MCF 10A (cell line): ENCODE measurements at regions of chrX and their contacts with region 1.

Region 1: DNA sequence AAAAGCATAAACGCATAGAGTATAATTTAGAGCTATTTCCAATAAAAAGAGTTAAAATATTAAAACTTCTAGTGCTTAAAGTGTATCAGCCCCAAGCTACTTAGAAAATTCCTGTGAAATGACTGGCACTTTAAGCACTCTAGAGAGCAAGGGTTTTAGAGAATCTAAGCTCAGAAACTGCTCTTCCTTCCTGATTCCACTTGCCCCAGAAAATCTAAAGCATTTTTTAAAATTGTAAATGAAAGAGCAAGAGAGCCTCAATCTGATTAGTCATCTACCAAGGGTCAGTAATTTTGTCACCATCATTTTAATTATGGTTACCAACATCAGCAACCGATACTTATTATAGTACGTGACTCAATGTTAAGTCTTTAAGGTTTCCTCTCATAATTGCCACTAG is 25.0 kb downstream of the CTPS2 start:
- DNase-seq: no peak
- H3K4me3 Mint-ChIP-seq: no peak overlapping the region
- H3K27ac Mint-ChIP-seq: no peak overlapping the region
- H3K4me1 Mint-ChIP-seq: no peaks in the 10 kb centered on the region
- H3K27me3 Mint-ChIP-seq: peaks cover 32% of the 10 kb centered on the region
- CTCF ChIP-seq: no peak

Region 2: DNA sequence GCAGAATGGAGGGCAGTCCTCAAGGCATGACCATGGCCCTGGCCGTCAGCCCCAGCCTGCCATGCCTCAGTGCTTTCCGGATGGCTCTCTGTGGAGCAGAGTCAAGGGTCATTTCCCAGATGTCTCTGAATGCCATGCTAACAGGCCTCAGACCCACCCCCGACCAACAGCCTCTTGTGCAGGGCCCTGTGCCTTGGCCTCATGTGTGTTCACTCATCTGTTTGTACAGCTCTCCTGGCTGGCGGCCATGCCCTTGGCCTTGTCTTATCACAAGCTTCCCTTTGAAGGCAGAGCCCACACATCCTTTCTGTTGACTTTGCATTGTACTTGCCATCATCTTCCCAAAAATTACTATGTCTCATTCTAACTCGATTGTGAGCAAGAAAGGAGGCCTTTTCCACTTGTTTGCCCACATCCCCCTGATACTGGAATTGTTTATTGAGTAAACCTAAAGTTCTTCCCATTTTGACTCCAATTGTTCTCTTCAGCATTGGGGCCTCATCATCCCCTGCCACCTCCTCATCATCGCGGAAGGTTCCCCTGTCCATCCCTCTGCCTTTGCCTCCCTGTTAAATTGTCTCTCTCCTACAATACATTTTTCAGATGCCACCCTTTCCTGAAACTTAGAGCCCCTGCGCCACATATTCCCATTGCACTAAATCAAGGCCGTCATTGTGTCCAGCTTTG is 943.2 kb before region 1 on chrX:
- CTCF ChIA-PET with region 1: no interaction called
- POLR2A ChIA-PET with region 1: no interaction called
- intact Hi-C with region 1: loop called (anchors 5 kb)
- DNase-seq: peak; percentile 39
- H3K4me3 Mint-ChIP-seq: no peak overlapping the region
- H3K27ac Mint-ChIP-seq: no peak overlapping the region
- H3K4me1 Mint-ChIP-seq: peaks cover 27% of the 10 kb centered on the region
- H3K27me3 Mint-ChIP-seq: no peaks in the 10 kb centered on the region
- CTCF ChIP-seq: no peak

Region 3: GRCh38 chrX:16807548-16807947 is 120.0 kb after region 1 on chrX:
- CTCF ChIA-PET with region 1: no interaction called
- POLR2A ChIA-PET with region 1: no interaction called
- intact Hi-C with region 1: no loop called
- DNase-seq: peak; percentile 40
- H3K4me3 Mint-ChIP-seq: peak overlapping the region; percentile 69
- H3K27ac Mint-ChIP-seq: peak overlapping the region; percentile 49
- H3K4me1 Mint-ChIP-seq: peaks cover 12% of the 10 kb centered on the region
- H3K27me3 Mint-ChIP-seq: no peaks in the 10 kb centered on the region
- CTCF ChIP-seq: peak; percentile 23

Region 4: GRCh38 chrX:17805120-17805519 is 1117.6 kb after region 1 on chrX:
- CTCF ChIA-PET with region 1: no interaction called
- POLR2A ChIA-PET with region 1: no interaction called
- intact Hi-C with region 1: no loop called
- DNase-seq: no peak
- H3K4me3 Mint-ChIP-seq: no peak overlapping the region
- H3K27ac Mint-ChIP-seq: no peak overlapping the region
- H3K4me1 Mint-ChIP-seq: no peaks in the 10 kb centered on the region
- H3K27me3 Mint-ChIP-seq: no peaks in the 10 kb centered on the region
- CTCF ChIP-seq: no peak